ENCODE measurements at regions of chr1 and their contacts with region 1.

Region 1: DNA sequence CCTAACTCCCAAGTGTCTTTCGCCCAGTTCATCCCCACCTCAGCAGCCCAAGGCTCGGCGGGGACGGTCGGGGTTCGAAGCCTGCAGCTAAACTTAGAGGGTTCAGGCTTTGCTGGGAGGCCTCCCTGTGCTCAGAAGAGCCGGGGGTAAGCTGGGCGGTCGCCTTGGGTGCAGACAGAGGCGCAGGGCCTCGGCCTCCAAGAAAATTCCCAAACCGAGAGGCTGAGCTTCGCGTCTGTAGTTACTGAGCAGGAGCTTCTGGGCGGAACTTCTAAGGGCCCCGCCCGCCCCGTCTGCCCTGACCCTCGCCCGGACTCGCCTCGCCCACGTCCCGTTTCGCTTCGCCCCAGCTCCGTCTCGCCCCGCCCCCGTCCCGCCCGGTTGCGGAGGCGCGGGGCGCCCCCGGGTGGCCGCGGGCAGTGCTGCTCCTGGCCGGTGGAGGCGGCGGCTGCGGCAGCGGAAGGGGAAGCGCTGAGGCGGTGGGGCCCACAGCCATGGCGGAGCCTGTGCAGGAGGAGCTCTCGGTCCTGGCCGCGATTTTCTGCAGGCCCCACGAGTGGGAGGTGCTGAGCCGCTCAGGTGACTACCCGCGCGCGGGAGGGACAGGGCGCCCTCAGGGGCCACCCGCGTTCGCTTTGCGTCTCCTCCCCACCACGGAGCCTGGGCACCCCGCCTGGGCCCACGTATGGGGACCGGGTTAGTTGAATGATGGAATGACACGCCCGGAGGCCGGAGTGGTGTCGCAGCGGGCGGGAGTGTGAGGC is at the start of gene RWDD3:
- DNase-seq: peak; percentile 83 to 88 (median 88)
- H3K4me3 ChIP-seq: peak within 1 kb of the TSS; percentile 85 to 91 (median 85)
- H3K4me3 Mint-ChIP-seq: peak within 1 kb of the TSS; percentile 87 to 92
- H3K27ac ChIP-seq: peak within 1 kb of the TSS; percentile 43 to 85
- H3K27ac Mint-ChIP-seq: peak within 1 kb of the TSS; percentile 71 to 88 (median 80)
- H3K4me1 ChIP-seq: peaks cover 12 to 13% of the 10 kb centered on the region in 2 donors
- H3K4me1 Mint-ChIP-seq: peaks cover 23% of the 10 kb centered on the region
- H3K27me3 ChIP-seq: peaks cover 11 to 26% of the 10 kb centered on the region in 2 donors
- H3K27me3 Mint-ChIP-seq: peaks cover 5 to 32% (median 27%) of the 10 kb centered on the region in 3 donors
- CTCF ChIP-seq: peak; percentile 89
- polyA plus RNA-seq, gene RWDD3: 9.2 to 20.1 (median 18.1) TPM

Region 2: DNA sequence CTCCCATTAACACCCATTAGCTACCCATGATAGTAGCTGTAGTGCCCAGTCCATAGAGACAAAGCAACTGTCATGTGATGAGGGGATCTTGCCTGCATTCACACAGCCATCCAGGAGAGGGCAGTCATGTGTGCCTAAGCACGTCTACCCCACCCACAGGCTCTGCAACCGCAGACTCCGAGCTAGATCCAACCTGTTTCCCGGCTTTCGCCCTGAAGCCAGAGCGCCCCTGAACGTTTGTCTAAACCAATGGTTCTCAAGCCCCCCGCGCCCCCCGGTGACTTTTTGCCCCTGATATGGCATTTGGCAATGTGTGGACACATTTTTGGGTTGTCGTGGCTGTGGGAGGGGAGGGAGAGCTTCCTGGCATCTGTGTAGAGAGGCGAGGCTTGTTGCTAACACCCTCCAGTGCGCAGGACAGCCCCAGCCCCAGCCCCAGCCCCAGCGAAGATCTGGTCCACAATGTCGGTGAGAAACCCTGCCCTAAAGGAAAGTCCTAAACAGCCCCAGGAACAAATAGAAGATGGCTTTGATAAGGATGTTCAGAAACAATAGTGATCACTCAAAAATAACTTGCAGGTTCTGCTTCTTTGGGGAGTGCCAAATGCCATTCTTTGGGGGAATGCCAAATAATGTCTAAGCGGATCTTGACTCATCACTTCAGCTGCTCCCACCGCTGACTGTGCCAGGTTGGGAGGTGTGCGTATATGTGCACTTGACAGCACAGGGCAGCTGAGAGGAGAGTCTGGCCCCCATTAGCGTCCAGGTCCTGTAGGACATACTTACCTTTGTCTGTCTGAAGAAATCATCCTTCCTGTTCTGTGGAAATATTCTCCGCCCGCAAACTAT is 379.2 kb before region 1 on chr1:
- intact Hi-C with region 1: loop called in 1 of 2 experiments (anchors 10 kb)
- DNase-seq: peak; percentile 71 to 81 (median 80)
- H3K4me3 ChIP-seq: peak overlapping the region in 2 of 3 experiments; percentile 7 to 71
- H3K4me3 Mint-ChIP-seq: no peak overlapping the region
- H3K27ac ChIP-seq: no peak overlapping the region
- H3K27ac Mint-ChIP-seq: no peak overlapping the region
- H3K4me1 ChIP-seq: peaks cover 5 to 7% of the 10 kb centered on the region in 2 donors
- H3K4me1 Mint-ChIP-seq: no peaks in the 10 kb centered on the region
- H3K27me3 ChIP-seq: peaks cover 8 to 11% of the 10 kb centered on the region in 2 donors
- H3K27me3 Mint-ChIP-seq: peaks cover 8 to 14% (median 10%) of the 10 kb centered on the region in 3 donors
- CTCF ChIP-seq: peak; percentile 82

Region 3: DNA sequence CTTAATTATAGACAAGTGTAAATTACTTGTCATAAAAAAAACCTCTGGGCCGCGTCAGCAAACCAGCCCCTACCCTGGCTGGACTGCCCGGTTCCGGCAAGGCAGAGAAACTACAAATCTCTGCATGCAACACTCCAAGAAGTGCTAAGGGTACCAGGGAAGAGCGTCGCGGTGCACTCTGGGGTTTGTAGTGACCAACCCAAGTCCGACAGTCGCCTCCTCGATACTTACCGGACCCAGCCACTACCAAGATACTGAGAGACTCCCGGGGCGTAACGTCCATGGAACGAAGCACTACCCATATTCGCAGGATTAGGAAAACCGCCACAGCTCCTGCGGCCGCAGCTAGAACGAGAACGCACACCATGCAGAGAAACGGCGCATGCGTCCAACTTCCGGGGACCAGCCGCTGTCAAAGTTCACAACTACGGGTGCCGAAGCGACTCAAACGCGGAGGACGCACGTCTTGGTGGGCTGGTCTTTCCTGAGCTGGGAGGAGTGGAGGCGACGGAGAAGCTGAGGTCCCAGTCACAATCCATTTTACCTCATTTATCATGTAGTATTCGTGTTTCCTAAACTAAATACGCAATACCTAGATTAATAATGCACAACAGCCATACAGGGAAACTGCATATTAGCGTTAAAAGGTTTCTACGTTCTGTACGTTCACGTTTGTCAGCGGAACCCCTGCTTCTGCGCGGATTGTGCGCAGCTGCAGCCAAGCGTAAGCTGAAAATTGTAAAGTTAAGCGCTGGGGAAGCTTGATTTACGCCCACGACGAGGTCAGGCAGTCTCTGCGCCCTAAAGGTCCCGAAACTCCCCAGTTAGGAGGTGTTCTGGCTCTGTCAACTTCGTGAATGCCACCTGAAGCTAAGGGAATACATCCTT is 161.1 kb before region 1 on chr1 and contains the start of gene ALG14:
- intact Hi-C with region 1: loop called (anchors 5 to 10 kb)
- DNase-seq: peak; percentile 82 to 88 (median 87)
- H3K4me3 ChIP-seq: peak within 1 kb of the TSS; percentile 53 to 90 (median 55)
- H3K4me3 Mint-ChIP-seq: peak within 1 kb of the TSS; percentile 99 to 100
- H3K27ac ChIP-seq: peak within 1 kb of the TSS; percentile 32 to 84
- H3K27ac Mint-ChIP-seq: peak within 1 kb of the TSS; percentile 93 to 99 (median 95)
- H3K4me1 ChIP-seq: peaks cover 12 to 16% of the 10 kb centered on the region in 2 donors
- H3K4me1 Mint-ChIP-seq: peaks cover 14% of the 10 kb centered on the region
- H3K27me3 ChIP-seq: peaks cover 0 to 7% of the 10 kb centered on the region in 2 donors
- H3K27me3 Mint-ChIP-seq: peaks cover 6 to 11% (median 6%) of the 10 kb centered on the region in 3 donors
- CTCF ChIP-seq: no peak
- polyA plus RNA-seq, gene ALG14: 0.27 to 5.5 (median 4.4) TPM